ENCODE measurements at regions of chr17 and their contacts with region 1.

Region 1: GRCh38 chr17:1055751-1056645 is 59.1 kb downstream of the TIMM22 start:
- DNase-seq: peak; percentile 78
- H3K4me3 ChIP-seq: no peak overlapping the region
- H3K27ac ChIP-seq: peak overlapping the region in 3 of 8 donors; percentile 13 to 24 (median 17)
- H3K4me1 ChIP-seq: peaks cover 0 to 10% (median 4%) of the 10 kb centered on the region in 6 donors
- H3K27me3 ChIP-seq: no peaks in the 10 kb centered on the region
- CTCF ChIP-seq: peak; percentile 29 to 82 (median 68)
- POLR2A ChIP-seq: no peak

Region 2: DNA sequence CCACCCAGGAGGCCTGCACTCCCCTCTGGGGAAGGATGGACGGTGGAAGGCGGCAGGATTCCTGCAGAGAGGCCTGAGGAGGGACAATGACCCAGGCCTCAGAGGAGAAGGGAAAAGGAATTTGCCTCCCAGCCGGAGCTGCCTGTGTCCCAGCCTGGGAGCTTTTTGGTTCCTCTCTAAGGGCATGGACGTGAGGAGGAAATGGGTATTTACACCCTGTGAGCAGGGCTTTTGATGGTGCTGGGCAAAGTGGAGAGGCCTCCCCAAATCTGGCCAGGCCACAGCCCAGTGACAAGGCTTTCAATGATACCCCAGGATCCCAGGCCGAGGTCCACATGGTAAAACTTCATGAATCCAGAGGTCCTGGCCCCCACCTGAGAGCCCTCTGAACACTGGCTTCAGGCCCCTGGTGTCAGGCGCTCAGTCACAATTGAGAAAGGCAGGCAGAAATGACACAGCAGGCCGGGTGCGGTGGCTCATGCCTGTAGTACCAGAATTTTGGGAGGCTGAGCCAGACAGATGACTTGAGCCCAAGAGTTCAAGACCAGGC is 818.5 kb before region 1 on chr17:
- intact Hi-C with region 1: no loop called
- DNase-seq: peak; percentile 32
- H3K4me3 ChIP-seq: no peak overlapping the region
- H3K27ac ChIP-seq: no peak overlapping the region
- H3K4me1 ChIP-seq: peaks cover 0 to 20% (median 10%) of the 10 kb centered on the region in 6 donors
- H3K27me3 ChIP-seq: no peaks in the 10 kb centered on the region
- CTCF ChIP-seq: no peak
- POLR2A ChIP-seq: no peak

Region 3: GRCh38 chr17:927611-928461 is 128.2 kb before region 1 on chr17:
- intact Hi-C with region 1: no loop called
- DNase-seq: no peak
- H3K4me3 ChIP-seq: no peak overlapping the region
- H3K27ac ChIP-seq: no peak overlapping the region
- H3K4me1 ChIP-seq: no peaks in the 10 kb centered on the region
- H3K27me3 ChIP-seq: peaks cover 0 to 6% (median 0%) of the 10 kb centered on the region in 7 donors
- CTCF ChIP-seq: no peak
- POLR2A ChIP-seq: no peak

Region 4: GRCh38 chr17:1005361-1005946 is 50.5 kb before region 1 on chr17:
- intact Hi-C with region 1: loop called (anchors 10 kb)
- DNase-seq: peak; percentile 78
- H3K4me3 ChIP-seq: peak overlapping the region in 3 of 8 donors; percentile 2 to 48 (median 18)
- H3K27ac ChIP-seq: peak overlapping the region; percentile 42 to 87 (median 76)
- H3K4me1 ChIP-seq: peaks cover 12 to 82% (median 58%) of the 10 kb centered on the region in 6 donors
- H3K27me3 ChIP-seq: no peaks in the 10 kb centered on the region
- CTCF ChIP-seq: no peak
- POLR2A ChIP-seq: no peak

Region 5: DNA sequence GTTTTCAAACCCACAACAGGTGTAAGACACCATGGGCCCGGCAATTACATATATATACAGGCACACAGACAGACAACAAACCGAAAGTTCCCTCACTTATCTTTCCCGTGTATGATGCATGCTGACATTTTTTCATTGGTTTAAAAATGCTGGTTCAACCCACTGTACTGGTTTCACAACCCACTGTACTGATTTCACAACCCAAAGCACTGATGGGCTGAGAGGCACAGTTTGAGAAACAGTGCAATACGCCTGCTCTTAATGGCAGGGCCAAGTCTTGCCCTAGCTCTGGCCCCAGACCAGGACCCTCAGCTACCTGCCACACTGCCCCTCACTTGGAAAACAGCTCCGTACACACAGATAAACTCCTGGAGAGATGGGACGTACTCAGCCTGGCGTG is 42.4 kb after region 1 on chr17:
- intact Hi-C with region 1: no loop called
- DNase-seq: no peak
- H3K4me3 ChIP-seq: peak overlapping the region in 1 of 8 donors; percentile 46
- H3K27ac ChIP-seq: peak overlapping the region in 7 of 8 donors; percentile 53 to 95 (median 89)
- H3K4me1 ChIP-seq: peaks cover 0 to 58% (median 17%) of the 10 kb centered on the region in 6 donors
- H3K27me3 ChIP-seq: no peaks in the 10 kb centered on the region
- CTCF ChIP-seq: no peak
- POLR2A ChIP-seq: no peak

Region 6: GRCh38 chr17:1206026-1206777 is 150.2 kb after region 1 on chr17:
- intact Hi-C with region 1: no loop called
- DNase-seq: no peak
- H3K4me3 ChIP-seq: no peak overlapping the region
- H3K27ac ChIP-seq: peak overlapping the region in 5 of 8 donors; percentile 5 to 53 (median 28)
- H3K4me1 ChIP-seq: peaks cover 5 to 68% (median 33%) of the 10 kb centered on the region in 6 donors
- H3K27me3 ChIP-seq: no peaks in the 10 kb centered on the region
- CTCF ChIP-seq: no peak
- POLR2A ChIP-seq: no peak